ENCODE measurements at regions of chr2 and their contacts with region 1.

Region 1: DNA sequence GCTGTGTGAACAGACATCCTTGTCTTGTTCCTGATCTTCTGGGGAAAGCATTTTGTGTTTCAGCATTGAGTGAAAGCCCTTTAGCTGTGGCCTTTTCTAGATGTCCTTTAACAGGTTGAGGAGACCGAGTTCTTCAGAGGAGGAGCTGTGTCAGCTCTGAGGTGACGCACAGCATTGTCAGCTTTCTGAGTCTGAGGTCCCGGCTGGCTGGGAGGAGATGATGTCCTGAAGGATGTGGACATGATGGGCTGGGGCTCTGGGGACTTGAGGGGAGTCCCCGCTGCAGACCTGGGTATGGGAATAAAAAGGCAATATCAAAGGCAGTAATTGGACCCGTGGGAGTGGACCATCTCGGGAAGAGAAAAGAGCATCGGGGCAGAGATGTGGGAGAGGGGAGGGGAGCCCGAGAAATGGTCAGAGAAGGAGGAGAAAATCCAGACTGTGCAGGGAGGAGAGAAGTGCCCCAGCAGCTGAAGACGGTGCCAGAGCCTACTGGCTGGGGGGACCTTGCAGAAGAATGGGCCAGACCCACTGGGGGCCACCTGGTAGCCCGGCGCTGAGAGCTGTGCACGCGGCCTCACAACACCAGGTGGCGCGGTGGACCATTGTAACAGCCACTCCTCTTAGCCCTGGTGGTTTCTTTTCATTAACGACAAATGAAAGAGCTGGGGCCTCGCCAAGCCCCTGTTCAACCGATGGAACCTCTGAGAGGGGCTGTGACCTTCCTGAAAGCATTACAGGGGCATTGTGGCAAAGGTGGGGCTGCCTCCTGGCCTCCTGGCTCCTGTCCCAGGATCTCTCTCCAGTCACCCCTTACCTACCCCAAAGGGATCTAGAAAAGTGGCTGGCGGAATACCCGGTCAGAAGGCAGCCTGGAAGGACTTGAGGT is 61.6 kb downstream of the ST3GAL5 start:
- DNase-seq: peak; percentile 87
- ATAC-seq: peak; percentile 97
- H3K4me3 Mint-ChIP-seq: no peak overlapping the region; the same call in 1 of the 2 replicates
- H3K27ac Mint-ChIP-seq: no peak overlapping the region
- H3K4me1 Mint-ChIP-seq: peaks cover 13% of the 10 kb centered on the region
- H3K27me3 Mint-ChIP-seq: no peaks in the 10 kb centered on the region
- CTCF ChIP-seq: peak; percentile 62

Region 2: DNA sequence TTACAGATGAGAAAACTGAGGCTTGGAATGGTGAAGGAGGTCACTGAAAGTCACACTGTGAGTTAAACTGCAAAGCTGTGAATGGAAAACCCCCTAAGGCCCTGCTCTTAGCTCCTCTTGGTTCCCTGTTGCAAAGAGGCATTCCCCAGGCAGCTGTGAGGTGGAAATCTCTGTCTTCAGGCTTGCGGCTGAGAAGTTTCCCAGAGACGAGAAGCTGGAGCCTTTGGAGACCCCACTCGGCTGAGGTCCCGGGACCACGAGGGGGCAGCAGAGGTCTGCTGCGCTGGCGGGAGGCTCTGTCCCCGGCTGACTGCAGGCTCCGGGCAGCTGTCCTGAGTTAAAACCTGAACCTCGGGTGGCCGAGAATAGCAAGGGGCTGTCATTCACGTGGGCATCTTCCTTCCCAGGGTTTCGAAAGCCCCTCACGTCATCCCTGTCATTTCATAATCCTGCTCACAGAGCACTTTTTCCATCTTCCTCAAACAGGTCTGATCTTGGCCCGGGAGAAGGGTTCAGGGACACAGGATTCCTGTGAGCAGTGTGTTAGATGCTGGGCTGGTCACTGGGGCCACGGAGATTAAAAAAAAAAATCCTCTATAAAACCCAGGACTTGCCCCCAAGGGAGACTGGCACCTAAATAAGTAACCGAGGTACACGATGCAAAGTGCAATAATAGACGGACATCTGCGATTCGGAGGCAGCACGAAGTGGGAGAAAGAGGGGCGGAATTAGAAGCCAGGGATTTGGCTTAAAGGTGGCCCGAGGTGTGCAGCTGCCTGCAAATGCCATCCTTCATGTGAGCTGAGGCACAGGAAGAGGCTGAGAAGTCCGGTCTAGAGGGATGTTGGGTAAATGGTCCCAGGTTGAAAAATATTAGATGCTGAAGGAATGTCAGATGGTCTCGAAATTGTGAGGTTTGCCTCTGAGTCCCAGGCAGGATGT is 98.1 kb before region 1 on chr2:
- CTCF ChIA-PET with region 1: interaction called, 24 read pairs
- POLR2A ChIA-PET with region 1: no interaction called
- DNase-seq: peak; percentile 92
- ATAC-seq: peak; percentile 98
- H3K4me3 Mint-ChIP-seq: no peak overlapping the region
- H3K27ac Mint-ChIP-seq: no peak overlapping the region
- H3K4me1 Mint-ChIP-seq: no peaks in the 10 kb centered on the region
- H3K27me3 Mint-ChIP-seq: no peaks in the 10 kb centered on the region; the same call in 1 of the 2 replicates
- CTCF ChIP-seq: peak; percentile 86

Region 3: DNA sequence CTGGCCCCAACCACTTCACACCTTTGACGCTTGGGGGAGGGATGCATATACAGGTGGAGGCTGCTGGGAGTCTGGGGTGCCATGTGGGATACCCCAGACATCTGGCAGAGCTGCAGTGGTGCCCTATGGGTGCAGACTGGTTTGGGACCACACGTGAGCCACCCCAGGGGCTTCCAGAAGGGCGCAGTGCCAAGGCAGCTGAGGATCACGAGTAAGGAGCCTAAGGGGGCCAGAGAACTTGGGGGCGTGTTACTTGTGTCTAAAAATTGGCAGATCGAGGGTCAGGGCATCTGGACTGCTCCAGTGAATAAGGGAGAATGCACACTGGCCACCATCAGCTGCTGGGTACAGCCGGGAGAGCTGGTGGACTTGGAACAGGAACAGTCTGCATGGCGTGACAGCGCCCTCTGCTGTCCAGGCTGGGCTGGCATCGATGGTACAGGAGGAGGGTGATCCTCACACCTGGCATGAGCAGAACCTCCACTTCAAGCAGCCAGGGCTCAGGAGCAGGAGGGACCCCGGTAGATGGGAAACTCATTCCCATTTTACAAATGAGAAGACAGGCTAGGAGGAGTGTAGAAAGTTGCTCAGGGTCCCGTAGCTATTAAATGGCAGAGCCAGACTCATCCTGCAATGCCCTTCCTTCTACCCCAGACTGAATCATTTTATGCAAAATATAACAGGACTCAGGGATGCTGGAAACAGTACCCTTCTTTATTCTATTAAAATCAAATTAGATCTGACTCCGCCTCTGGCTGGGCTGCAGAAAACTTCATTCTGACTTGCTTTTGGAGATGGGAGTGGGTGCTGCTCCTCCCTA is 13.0 kb before region 1 on chr2:
- CTCF ChIA-PET with region 1: interaction called, 26 read pairs
- POLR2A ChIA-PET with region 1: no interaction called
- DNase-seq: peak; percentile 96
- ATAC-seq: peak; percentile 95
- H3K4me3 Mint-ChIP-seq: no peak overlapping the region
- H3K27ac Mint-ChIP-seq: no peak overlapping the region
- H3K4me1 Mint-ChIP-seq: peaks cover 9% of the 10 kb centered on the region
- H3K27me3 Mint-ChIP-seq: peaks cover 3% of the 10 kb centered on the region; the same call in 1 of the 2 replicates
- CTCF ChIP-seq: peak; percentile 95

Region 4: DNA sequence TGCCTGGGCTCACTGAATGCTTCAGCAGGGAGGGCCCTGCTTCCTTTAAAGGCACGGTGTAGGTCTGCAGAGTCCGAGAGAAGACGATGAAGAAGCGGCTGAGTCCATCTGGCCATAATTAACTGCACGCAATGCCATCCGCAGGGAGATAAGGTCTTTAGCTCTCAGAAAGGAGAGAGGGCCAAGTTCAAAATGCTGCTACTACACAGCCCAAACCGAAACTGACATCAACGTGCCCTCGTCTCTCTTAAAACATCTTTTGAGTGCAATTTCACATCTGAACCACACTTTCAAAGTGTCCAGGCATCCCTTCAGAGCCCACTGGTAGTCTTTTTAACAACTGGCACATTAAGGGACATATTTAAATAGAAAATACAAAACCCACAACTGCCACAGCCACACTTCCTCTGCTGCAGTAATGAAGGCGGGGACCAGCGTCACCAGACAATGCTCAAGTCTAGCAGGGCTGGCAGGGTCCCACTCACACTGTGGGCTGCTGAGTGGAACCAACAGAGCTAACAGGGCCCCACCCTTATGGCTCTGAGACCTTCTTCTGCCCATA is 25.8 kb after region 1 on chr2:
- CTCF ChIA-PET with region 1: interaction called, 17 read pairs
- POLR2A ChIA-PET with region 1: no interaction called
- DNase-seq: no peak
- ATAC-seq: no peak
- H3K4me3 Mint-ChIP-seq: no peak overlapping the region
- H3K27ac Mint-ChIP-seq: peak overlapping the region; percentile 19; the same call in 1 of the 2 replicates
- H3K4me1 Mint-ChIP-seq: no peaks in the 10 kb centered on the region
- H3K27me3 Mint-ChIP-seq: no peaks in the 10 kb centered on the region
- CTCF ChIP-seq: no peak

Region 5: DNA sequence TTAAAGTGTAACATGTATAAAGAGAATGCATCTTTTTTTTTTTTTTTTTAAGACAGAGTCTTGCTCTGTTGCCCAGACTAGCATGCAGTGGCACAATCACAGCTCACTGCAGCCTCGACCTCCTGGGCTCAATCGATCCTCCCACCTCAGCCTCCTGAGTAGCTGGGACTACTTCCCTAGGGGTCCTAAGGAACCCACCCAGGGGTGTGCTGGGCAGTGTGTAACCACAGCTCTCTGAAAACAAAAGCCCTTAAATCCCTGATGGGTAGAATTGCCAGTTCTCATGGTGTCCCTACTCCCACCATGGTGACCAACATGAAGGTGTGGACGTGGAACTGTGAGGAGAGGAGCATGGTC is 167.2 kb after region 1 on chr2:
- CTCF ChIA-PET with region 1: interaction called, 18 read pairs
- POLR2A ChIA-PET with region 1: no interaction called
- DNase-seq: no peak
- ATAC-seq: no peak
- H3K4me3 Mint-ChIP-seq: no peak overlapping the region
- H3K27ac Mint-ChIP-seq: no peak overlapping the region
- H3K4me1 Mint-ChIP-seq: 0 out of 2 replicates have a peak, but pooled peaks cover 3% of the 10 kb centered on the region
- H3K27me3 Mint-ChIP-seq: no peaks in the 10 kb centered on the region
- CTCF ChIP-seq: no peak

Region 6: GRCh38 chr2:86035883-86036668 is 208.8 kb after region 1 on chr2:
- CTCF ChIA-PET with region 1: interaction called, 36 read pairs
- POLR2A ChIA-PET with region 1: no interaction called
- DNase-seq: no peak
- ATAC-seq: peak; percentile 65
- H3K4me3 Mint-ChIP-seq: no peak overlapping the region
- H3K27ac Mint-ChIP-seq: peak overlapping the region; percentile 80; the same call in 1 of the 2 replicates
- H3K4me1 Mint-ChIP-seq: peaks cover 13% of the 10 kb centered on the region
- H3K27me3 Mint-ChIP-seq: no peaks in the 10 kb centered on the region
- CTCF ChIP-seq: no peak